ENCODE measurements at regions of chr10 and their contacts with region 1.

Region 1: DNA sequence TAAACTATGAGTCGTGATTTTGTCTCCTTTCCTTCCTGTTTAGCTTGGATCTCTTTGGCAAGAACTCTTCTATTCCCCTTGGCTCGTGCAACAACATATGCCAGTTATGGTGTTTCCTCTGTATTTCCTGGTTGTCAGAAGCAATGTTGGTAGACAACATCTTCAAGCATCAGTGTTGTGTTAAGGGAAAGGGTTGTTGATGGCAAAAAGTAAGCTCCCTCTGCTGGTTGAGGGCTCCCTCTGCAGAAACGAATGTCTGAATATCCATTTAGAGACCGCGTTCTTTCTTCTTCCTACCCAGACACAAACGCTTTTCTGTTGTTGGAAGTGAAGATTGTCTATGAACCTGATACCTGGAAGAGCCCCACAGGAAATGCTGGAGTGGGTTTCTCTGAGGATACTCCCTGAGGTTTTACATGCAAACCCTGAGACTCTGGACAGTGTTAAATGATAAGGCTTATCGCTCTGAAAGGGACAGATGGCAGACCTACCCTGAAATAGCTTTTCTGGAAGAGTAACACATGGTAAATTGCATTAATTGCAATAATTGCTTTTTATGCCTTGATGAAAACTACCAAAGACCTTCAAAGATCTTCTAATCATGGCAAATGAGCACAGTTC is 23.5 kb upstream of the C1QL3 start:
- DNase-seq: peak; percentile 25
- H3K4me3 ChIP-seq: no peak overlapping the region
- H3K27ac ChIP-seq: no peak overlapping the region
- H3K4me1 ChIP-seq: no peaks in the 10 kb centered on the region
- H3K27me3 ChIP-seq: no peaks in the 10 kb centered on the region
- CTCF ChIP-seq: peak; percentile 79 to 82

Region 2: DNA sequence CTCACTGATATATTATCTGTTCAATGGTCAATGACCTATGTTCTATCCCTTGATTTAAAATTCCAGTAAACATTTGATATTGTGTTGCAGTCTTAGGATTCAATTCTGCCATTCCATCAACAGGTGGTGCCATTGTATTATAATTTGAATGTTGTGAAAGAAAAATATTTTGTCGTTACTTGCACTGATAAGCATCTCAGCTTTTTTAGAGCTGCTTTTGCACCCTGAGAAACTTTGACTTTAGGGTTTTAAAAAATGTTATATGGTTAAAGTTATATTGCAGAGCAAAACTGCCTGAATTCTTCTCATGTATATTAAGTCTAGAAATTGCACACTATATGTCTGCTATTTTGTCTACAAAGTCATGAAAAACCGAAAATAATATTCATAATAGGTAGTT is 666.2 kb before region 1 on chr10:
- CTCF ChIA-PET with region 1: no interaction called
- dilution Hi-C with region 1: no loop called
- in situ Hi-C with region 1: no loop called
- intact Hi-C with region 1: loop called (anchors 10 kb)
- DNase-seq: no peak
- H3K4me3 ChIP-seq: no peak overlapping the region
- H3K27ac ChIP-seq: no peak overlapping the region
- H3K4me1 ChIP-seq: no peaks in the 10 kb centered on the region
- H3K27me3 ChIP-seq: no peaks in the 10 kb centered on the region
- CTCF ChIP-seq: peak; percentile 68 to 74

Region 3: GRCh38 chr10:15901889-15902288 is 643.3 kb before region 1 on chr10:
- CTCF ChIA-PET with region 1: interaction called, 6 read pairs
- dilution Hi-C with region 1: no loop called
- in situ Hi-C with region 1: loop called in 1 of 2 experiments (anchors 25 kb)
- intact Hi-C with region 1: loop called (anchors 2 kb)
- DNase-seq: no peak
- H3K4me3 ChIP-seq: no peak overlapping the region
- H3K27ac ChIP-seq: no peak overlapping the region
- H3K4me1 ChIP-seq: no peaks in the 10 kb centered on the region
- H3K27me3 ChIP-seq: no peaks in the 10 kb centered on the region
- CTCF ChIP-seq: no peak

Region 4: GRCh38 chr10:16562906-16563305 is 17.7 kb after region 1 on chr10:
- CTCF ChIA-PET with region 1: no interaction called
- dilution Hi-C with region 1: no loop called
- in situ Hi-C with region 1: no loop called
- intact Hi-C with region 1: loop called (anchors 2 kb)
- DNase-seq: no peak
- H3K4me3 ChIP-seq: no peak overlapping the region
- H3K27ac ChIP-seq: no peak overlapping the region
- H3K4me1 ChIP-seq: no peaks in the 10 kb centered on the region
- H3K27me3 ChIP-seq: no peaks in the 10 kb centered on the region
- CTCF ChIP-seq: no peak